Right ventricle myocardium inferior (tissue), 1 donor: ENCODE measurements at regions of chr3 and their contacts with region 1.

Region 1: GRCh38 chr3:10224784-10225665 is 23.2 kb upstream of the TATDN2 start:
- DNase-seq: no peak
- ATAC-seq: peak; percentile 92

Region 2: DNA sequence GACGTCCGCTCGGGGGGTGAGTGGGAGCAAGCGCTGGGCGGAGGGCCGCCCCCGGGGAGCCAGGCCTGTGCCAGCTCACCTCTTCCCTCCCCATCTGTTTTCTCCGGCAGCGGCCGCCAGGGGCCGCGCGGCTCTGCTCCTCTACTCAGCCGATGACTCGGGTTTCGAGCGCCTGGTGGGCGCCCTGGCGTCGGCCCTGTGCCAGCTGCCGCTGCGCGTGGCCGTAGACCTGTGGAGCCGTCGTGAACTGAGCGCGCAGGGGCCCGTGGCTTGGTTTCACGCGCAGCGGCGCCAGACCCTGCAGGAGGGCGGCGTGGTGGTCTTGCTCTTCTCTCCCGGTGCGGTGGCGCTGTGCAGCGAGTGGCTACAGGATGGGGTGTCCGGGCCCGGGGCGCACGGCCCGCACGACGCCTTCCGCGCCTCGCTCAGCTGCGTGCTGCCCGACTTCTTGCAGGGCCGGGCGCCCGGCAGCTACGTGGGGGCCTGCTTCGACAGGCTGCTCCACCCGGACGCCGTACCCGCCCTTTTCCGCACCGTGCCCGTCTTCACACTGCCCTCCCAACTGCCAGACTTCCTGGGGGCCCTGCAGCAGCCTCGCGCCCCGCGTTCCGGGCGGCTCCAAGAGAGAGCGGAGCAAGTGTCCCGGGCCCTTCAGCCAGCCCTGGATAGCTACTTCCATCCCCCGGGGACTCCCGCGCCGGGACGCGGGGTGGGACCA is 292.0 kb before region 1 on chr3:
- intact Hi-C with region 1: loop called (anchors 5 kb)
- DNase-seq: peak; percentile 91
- ATAC-seq: peak; percentile 84

Region 3: GRCh38 chr3:9976721-9977709 is 248.0 kb before region 1 on chr3:
- intact Hi-C with region 1: loop called (anchors 10 kb)
- DNase-seq: peak; percentile 82
- ATAC-seq: peak; percentile 98

Region 4: DNA sequence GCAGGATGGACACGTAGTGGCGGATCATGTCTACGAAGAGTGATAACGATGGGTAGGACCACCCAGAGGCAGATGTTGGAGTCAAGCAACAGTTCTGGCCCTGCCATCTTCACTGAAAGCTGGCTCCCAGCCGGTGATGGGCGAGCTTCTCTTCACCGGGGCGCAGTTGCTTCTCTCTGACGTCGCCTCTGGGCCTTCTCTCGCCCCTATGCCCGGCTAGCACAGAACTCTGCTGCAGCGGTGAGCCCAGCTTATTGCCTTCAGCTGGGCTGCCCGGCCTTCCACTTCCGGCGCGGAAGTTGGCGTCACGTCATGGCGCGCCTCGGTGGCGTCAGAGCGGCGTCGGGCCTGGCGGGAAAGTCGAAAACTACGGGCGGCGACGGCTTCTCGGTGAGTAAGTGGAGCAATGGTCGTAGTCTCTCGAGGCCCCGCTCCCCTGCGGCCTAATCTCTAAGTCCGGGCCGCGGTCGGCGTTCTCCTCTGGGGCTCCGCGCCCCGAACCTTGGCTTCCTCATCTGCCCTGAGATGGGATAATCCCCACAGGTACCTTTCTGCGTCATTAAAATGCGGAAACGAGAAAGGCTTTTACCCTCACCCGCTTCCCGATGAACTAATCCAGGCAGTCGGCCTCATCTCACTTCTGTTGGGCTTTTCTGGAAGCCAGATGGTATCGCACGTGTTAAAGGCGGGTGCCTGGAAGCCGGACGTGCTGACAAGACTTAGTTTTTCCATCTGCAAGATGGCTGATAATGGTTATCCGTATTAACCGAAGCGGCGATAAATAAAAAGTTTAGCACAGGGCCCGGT is 198.7 kb before region 1 on chr3 and contains the start of gene FANCD2:
- intact Hi-C with region 1: loop called (anchors 10 kb)
- DNase-seq: peak; percentile 94
- ATAC-seq: peak; percentile 91
- total RNA-seq, gene FANCD2: 1.0 TPM

Region 5: DNA sequence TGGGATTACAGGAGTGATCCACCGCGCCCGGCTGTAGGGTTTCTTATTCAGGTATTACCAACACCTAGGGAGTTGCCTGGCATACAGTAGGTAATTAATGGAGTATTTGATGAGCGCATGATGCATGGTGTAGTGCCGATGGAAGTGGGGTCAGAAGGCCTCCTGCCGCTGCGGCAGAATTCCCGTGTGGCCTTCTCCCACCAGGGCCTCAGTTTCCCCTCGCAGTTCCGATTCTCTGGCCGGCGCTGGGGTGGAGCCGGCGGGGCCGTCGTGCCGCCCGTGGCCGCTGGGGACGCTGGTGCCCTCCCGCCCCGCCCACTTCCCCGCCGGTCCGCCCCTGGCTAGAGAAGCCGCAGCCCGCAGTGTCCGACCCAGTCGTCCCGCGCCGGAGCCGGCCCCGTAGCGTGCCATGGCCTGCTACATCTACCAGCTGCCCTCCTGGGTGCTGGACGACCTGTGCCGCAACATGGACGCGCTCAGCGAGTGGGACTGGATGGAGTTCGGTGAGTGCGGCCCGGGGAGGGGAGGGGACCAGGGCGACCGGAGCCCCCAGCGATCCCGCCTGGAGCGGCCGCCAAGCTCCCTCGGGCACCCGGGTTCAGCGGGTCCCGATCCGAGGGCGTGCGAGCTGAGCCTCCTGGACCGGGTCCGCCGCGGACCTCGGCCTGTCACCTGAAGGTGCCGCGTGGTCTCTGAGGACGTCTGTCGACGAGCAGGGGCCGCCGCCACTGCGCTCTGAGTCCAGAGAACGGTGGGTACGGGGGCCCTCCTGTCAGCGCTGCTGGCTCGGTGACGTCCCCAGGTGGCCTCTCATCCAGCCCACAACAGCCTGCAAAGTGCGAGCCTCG is 60.3 kb before region 1 on chr3 and contains the start of gene IRAK2:
- intact Hi-C with region 1: loop called (anchors 2 kb)
- DNase-seq: peak; percentile 92
- ATAC-seq: peak; percentile 95
- total RNA-seq, gene IRAK2: 2.0 TPM

Region 6: GRCh38 chr3:10286596-10287330 is 61.7 kb after region 1 on chr3:
- intact Hi-C with region 1: no loop called
- DNase-seq: no peak
- ATAC-seq: no peak